Activated CD4-positive, alpha-beta T cell treated with anti-CD3 and anti-CD28 coated beads, Interleukin-2, amount 10 ng/mL, durations not matched to agents 24 days and 14 days (primary cell): ENCODE measurements at regions of chr6 and their contacts with region 1.

Region 1: DNA sequence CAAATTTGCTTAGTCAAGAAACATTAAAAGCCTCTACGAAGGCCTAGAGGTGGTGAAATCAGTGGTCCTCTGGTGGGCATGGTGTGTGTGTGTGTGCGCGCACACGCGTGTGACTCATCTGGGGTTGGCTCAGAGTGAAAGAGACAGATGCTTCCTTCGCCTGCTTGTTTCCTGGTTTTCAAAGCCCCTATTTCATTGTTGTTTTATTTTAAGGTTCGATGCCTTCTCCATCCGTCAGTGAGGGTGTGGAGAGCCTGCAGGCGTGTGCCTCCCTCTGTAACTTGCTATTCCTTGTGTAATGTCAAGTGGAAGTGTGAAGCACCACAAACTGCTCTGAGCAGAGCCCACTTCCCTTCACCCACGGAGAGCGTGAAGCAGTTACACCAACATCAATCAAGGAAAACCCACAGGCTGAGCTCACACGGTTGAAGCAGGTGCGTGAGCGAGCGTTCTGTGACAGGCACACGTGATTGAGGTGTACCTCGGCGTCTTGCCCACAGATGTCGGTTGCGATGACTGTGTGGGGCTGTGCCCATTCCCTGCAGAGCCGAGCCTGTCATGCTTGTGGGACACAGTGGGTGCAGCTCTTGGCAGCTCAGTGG is 233.9 kb downstream of the PRL start:
- DNase-seq: peak; percentile 83
- H3K4me3 Mint-ChIP-seq: peak overlapping the region; percentile 59
- H3K27ac Mint-ChIP-seq: peak overlapping the region; percentile 77
- H3K4me1 Mint-ChIP-seq: peaks cover 13% of the 10 kb centered on the region
- H3K27me3 Mint-ChIP-seq: peaks cover 5% of the 10 kb centered on the region

Region 2: GRCh38 chr6:20202324-20202658 is 1860.6 kb before region 1 on chr6:
- intact Hi-C with region 1: loop called (anchors 10 kb)
- DNase-seq: no peak
- H3K4me3 Mint-ChIP-seq: no peak overlapping the region
- H3K27ac Mint-ChIP-seq: peak overlapping the region; percentile 21
- H3K4me1 Mint-ChIP-seq: peaks cover 57% of the 10 kb centered on the region
- H3K27me3 Mint-ChIP-seq: no peaks in the 10 kb centered on the region

Region 3: GRCh38 chr6:21664314-21665109 is 398.4 kb before region 1 on chr6:
- intact Hi-C with region 1: loop called (anchors 10 kb)
- DNase-seq: peak; percentile 57
- H3K4me3 Mint-ChIP-seq: peak overlapping the region; percentile 68
- H3K27ac Mint-ChIP-seq: no peak overlapping the region
- H3K4me1 Mint-ChIP-seq: peaks cover 24% of the 10 kb centered on the region
- H3K27me3 Mint-ChIP-seq: peaks cover 63% of the 10 kb centered on the region

Region 4: GRCh38 chr6:21831521-21832291 is 231.2 kb before region 1 on chr6:
- intact Hi-C with region 1: loop called (anchors 10 kb)
- DNase-seq: no peak
- H3K4me3 Mint-ChIP-seq: no peak overlapping the region
- H3K27ac Mint-ChIP-seq: no peak overlapping the region
- H3K4me1 Mint-ChIP-seq: peaks cover 23% of the 10 kb centered on the region
- H3K27me3 Mint-ChIP-seq: peaks cover 6% of the 10 kb centered on the region

Region 5: DNA sequence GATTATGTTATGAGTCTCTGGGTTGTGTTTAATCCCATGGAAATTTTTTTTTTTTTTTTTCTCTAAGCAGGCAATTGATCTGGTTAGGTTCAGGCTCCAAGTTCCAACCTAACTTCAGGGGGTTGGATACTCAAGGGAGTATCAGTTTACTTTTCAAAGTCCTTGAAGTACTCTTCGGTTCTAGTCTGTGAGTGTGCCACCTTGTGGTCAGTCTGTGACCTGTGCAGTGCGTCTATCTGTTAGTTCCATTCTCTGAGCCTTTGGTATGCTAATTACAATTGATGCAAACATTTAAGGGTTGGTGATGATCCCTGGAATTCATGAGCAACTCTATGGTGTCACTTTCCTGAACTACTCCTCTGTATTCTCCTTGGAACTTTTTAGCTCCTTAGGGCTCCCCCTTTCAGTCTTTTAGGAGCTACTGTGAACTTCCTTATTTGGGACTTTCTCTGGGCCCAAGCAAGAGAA is 127.3 kb before region 1 on chr6:
- intact Hi-C with region 1: loop called (anchors 10 kb)
- DNase-seq: peak; percentile 69
- H3K4me3 Mint-ChIP-seq: no peak overlapping the region
- H3K27ac Mint-ChIP-seq: no peak overlapping the region
- H3K4me1 Mint-ChIP-seq: no peaks in the 10 kb centered on the region
- H3K27me3 Mint-ChIP-seq: no peaks in the 10 kb centered on the region

Region 6: GRCh38 chr6:22263748-22264147 is 200.8 kb after region 1 on chr6:
- intact Hi-C with region 1: no loop called
- DNase-seq: no peak
- H3K4me3 Mint-ChIP-seq: no peak overlapping the region
- H3K27ac Mint-ChIP-seq: no peak overlapping the region
- H3K4me1 Mint-ChIP-seq: no peaks in the 10 kb centered on the region
- H3K27me3 Mint-ChIP-seq: no peaks in the 10 kb centered on the region